ENCODE measurements at regions of chr3 and their contacts with region 1.

Region 1: DNA sequence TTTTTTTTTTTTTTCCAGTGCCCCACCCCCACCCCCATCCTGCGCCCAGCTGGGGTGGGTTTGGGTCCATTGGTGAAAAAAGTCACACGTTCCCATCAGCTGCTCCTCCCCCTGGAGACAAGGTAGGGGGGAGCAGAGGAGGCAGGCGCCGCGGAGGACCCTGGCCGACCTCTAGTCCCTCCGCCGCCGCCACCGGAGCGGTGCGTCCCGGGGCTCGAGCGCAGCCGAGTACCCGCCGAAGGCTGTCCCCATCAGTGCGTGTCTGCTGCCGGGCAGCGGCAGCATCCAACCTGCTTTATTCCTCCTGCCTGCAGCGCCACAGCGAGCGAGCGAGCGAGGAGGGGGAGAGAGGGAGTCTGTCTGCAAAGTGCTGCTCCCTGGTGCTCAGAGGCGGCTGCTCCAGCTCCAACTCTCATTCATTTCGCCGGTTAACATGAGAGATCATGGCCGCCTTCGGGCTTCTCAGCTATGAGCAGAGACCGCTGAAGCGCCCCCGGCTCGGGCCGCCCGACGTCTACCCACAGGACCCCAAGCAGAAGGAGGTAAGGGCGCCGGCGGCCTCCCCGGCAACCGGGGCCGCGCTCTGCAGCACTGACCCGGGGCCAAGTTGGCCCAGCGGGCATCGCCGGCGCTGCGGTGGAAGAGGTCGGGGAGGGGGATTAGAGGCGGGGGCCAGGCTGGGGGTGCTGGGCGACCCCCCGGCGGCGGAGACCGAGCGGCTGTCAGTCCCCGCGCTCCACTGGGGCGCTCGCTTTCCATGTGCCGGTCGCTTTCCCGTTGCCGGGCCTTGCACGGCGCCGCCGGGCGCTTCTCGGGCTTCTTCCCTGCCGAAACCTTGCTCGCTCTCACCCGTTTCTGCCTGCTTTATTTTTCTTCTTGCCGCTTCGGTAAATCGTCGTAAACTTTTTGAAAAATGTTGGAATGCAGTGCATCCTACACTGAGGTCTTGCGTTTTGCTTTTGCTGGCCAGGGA is 1.3 kb downstream of the MED12L start:
- DNase-seq: peak in 1 of 2 experiments; percentile 76
- H3K4me3 ChIP-seq: peak overlapping the region; percentile 55 to 76 (median 72)
- H3K27ac ChIP-seq: no peak overlapping the region
- H3K4me1 ChIP-seq: peaks cover 2 to 20% (median 9%) of the 10 kb centered on the region in 4 experiments; a peak in 6 of 7 replicates
- H3K27me3 ChIP-seq: peaks cover 2 to 7% (median 5%) of the 10 kb centered on the region in 4 experiments; a peak in 6 of 7 replicates
- CTCF ChIP-seq: peak; percentile 39 to 47 (median 41)
- EP300 ChIP-seq: no peak
- POLR2A ChIP-seq: peak in 1 of 2 experiments; percentile 62; a peak in 2 of 3 replicates
- RAD21 ChIP-seq: peak; percentile 23 to 46

Region 2: DNA sequence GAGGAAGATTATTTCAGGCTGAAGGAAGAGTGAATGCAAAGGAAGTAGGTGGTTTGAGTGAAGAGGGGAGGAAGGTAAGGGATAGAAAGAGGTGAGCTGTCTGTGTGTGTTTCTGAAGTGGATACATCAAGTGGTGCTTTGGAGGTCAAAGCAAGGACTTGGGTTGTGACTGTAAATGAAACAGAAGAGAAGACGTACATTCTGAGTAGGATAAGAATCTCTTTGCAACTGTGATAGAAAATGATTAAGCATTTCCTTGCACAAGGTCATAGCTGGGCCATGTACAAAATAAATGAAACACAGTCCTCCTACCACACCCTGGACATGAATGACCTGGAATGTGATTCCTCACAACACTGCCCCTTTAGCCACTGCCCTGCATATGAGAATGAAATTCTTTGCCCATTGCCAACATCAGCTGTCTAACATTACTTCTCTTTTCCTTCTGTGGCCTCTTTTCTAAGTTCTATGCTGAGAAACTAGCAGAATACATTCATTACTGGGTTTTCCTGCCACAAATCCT is 153.2 kb before region 1 on chr3:
- CTCF ChIA-PET with region 1: interaction called, 11 read pairs
- POLR2A ChIA-PET with region 1: no interaction called
- DNase-seq: no peak
- H3K4me3 ChIP-seq: no peak overlapping the region
- H3K27ac ChIP-seq: no peak overlapping the region
- H3K4me1 ChIP-seq: no peaks in the 10 kb centered on the region
- H3K27me3 ChIP-seq: no peaks in the 10 kb centered on the region
- CTCF ChIP-seq: no peak
- EP300 ChIP-seq: no peak
- POLR2A ChIP-seq: no peak
- RAD21 ChIP-seq: no peak

Region 3: DNA sequence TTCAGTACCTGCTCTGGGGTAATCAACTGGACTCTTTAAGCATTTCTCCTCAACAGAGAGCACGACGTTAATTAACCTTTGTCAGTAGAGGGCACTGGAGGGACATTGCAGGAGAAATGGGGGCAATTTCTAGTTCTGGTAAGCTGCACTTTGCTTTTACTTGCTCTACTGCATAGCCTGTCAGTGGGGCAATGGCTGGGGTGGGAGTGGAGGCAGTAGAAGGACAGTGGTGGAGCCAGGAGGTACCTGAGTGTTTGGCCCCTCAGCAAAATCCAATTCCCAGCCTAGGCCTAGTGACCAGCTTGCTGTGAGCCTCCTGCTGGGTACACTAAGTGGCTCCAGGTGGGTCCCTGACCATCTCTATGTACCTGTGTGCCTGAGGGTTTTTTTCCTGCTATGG is 19.6 kb before region 1 on chr3:
- CTCF ChIA-PET with region 1: interaction called, 78 read pairs
- POLR2A ChIA-PET with region 1: interaction called, 4 read pairs
- DNase-seq: peak in 1 of 2 experiments; percentile 53
- H3K4me3 ChIP-seq: no peak overlapping the region
- H3K27ac ChIP-seq: no peak overlapping the region
- H3K4me1 ChIP-seq: no peaks in the 10 kb centered on the region
- H3K27me3 ChIP-seq: peaks cover 0 to 1% (median 0%) of the 10 kb centered on the region in 4 experiments; a peak in 1 of 7 replicates
- CTCF ChIP-seq: peak in 2 of 3 experiments; percentile 68 to 77; a peak in 3 of 4 replicates
- EP300 ChIP-seq: no peak
- POLR2A ChIP-seq: no peak
- RAD21 ChIP-seq: peak; percentile 77 to 83

Region 4: GRCh38 chr3:151107693-151108092 is 20.9 kb after region 1 on chr3:
- CTCF ChIA-PET with region 1: interaction called, 22 read pairs
- POLR2A ChIA-PET with region 1: interaction called, 10 read pairs
- DNase-seq: no peak
- H3K4me3 ChIP-seq: no peak overlapping the region
- H3K27ac ChIP-seq: no peak overlapping the region
- H3K4me1 ChIP-seq: peaks cover 0 to 10% (median 6%) of the 10 kb centered on the region in 4 experiments; a peak in 3 of 7 replicates
- H3K27me3 ChIP-seq: no peaks in the 10 kb centered on the region
- CTCF ChIP-seq: no peak
- EP300 ChIP-seq: no peak
- POLR2A ChIP-seq: no peak
- RAD21 ChIP-seq: no peak

Region 5: DNA sequence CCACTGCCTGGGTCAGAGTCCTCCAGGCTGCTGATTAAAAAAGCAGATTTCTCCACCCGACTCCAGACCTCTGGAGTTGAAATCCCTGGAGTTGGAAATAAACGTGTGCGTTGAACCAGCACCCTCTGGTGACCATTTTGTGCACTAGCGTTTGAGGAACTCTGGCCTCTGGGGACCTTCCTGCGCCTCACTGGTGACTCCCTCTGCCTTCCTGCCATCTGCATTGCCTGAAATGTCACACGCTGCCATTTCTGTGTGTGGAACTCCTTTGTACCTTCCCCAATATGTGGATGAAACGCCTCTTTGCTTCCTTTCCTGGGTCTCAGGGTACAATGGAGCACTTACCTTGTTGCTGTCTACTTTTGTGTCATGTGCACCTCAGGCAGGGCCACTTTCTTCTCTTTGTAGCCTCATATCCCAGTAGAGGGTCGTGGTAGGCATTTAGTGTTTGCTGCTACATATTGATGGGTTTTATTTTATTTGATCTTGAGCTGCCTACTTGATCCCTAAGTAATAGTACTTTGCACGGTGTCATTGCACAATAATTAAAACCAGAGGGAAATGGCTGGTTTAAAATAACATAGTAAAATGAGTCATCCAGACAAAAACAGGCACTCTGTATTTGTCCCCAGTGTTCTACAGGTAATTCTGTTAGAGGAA is 59.4 kb after region 1 on chr3:
- CTCF ChIA-PET with region 1: interaction called, 29 read pairs
- POLR2A ChIA-PET with region 1: interaction called, 5 read pairs
- DNase-seq: peak; percentile 63 to 78
- H3K4me3 ChIP-seq: no peak overlapping the region; a peak in 1 of 8 replicates
- H3K27ac ChIP-seq: no peak overlapping the region
- H3K4me1 ChIP-seq: peaks cover 2 to 14% (median 8%) of the 10 kb centered on the region in 4 experiments; a peak in 6 of 7 replicates
- H3K27me3 ChIP-seq: no peaks in the 10 kb centered on the region
- CTCF ChIP-seq: peak; percentile 82 to 96 (median 95)
- EP300 ChIP-seq: no peak
- POLR2A ChIP-seq: no peak
- RAD21 ChIP-seq: peak; percentile 95

Region 6: DNA sequence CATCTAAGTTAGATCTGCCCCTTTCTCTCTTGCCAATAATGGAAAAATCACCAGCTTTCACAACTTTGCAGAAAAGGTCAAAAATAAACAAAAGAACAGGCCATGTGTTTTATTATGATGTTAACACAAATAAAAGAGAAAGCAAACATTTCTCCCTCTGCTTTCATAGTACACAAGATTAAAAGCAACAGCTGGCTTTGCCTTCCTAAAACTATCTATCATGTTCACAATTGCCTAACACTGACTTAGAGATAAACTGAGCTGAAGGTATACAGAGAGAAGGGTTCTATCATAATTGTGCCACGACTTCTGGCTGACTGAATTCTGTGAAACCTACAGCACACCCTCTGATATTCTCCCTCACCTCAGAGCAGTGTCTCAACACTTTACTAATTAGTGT is 756.5 kb after region 1 on chr3:
- CTCF ChIA-PET with region 1: no interaction called
- POLR2A ChIA-PET with region 1: no interaction called
- DNase-seq: no peak
- H3K4me3 ChIP-seq: no peak overlapping the region
- H3K27ac ChIP-seq: no peak overlapping the region
- H3K4me1 ChIP-seq: no peaks in the 10 kb centered on the region
- H3K27me3 ChIP-seq: peaks cover 0 to 1% (median 0%) of the 10 kb centered on the region in 4 experiments; a peak in 1 of 7 replicates
- CTCF ChIP-seq: no peak
- EP300 ChIP-seq: no peak
- POLR2A ChIP-seq: no peak
- RAD21 ChIP-seq: no peak